Activated CD4-positive, alpha-beta memory T cell treated with anti-CD3 and anti-CD28 coated beads for 36 hours (primary cell): ENCODE measurements at regions of chr16 and their contacts with region 1.

Region 1: GRCh38 chr16:29700253-29700987 is 21.4 kb downstream of the QPRT start:
- DNase-seq: peak; percentile 86
- H3K4me3 Mint-ChIP-seq: peak overlapping the region; percentile 26
- H3K27ac Mint-ChIP-seq: peak overlapping the region; percentile 80
- H3K4me1 Mint-ChIP-seq: peaks cover 34% of the 10 kb centered on the region
- H3K27me3 Mint-ChIP-seq: no peaks in the 10 kb centered on the region

Region 2: DNA sequence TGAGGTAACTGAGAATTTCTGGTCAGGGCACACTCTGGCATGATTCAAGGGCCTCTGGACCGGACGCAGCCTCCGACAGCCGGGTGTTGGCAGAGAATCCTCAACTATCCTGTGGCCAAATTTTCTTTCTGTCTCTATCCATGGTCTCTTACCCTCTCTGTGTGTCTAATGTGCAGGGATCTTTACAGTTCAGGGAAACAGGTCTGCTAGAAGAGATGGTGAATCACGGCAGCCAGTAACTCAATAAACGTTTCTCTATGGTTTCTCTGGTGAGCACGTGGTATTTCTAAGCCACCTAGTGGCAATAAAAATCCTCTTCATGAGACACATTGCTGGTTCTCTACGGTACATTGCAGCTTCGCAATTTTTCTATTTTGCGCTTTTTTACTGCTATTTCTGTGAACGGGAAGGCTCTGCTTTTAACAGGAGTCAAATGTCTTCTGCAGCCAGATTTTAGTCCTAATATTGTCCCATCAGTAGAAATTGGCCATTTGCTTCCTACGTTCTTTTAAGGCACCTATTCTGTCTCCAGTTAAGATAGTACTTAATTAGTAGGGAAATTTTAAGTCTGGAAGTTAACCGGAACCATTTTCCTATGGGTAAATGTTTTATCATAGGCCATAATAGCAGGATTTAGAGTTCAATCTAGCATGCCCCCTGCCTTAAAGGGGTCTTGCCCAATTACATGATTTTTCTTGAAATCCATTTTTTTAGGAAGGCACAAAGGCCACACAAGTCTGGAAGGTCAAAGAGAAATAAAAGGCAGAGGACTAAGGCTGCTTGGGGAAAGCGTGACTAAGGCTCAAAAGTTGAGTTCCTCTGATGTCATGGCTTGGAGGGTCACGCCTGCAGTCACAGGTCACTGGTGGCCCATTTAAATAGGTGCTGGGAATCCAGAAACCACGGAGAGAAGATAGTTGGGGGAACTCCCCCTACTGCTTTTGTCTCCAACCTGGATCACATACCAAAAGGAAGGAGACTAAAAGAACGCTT is 10.1 kb after region 1 on chr16:
- CTCF ChIA-PET with region 1: interaction called, 68 read pairs
- POLR2A ChIA-PET with region 1: interaction called, 5 read pairs
- intact Hi-C with region 1: loop called (anchors 1 kb)
- DNase-seq: peak; percentile 33
- H3K4me3 Mint-ChIP-seq: no peak overlapping the region
- H3K27ac Mint-ChIP-seq: no peak overlapping the region
- H3K4me1 Mint-ChIP-seq: peaks cover 15% of the 10 kb centered on the region
- H3K27me3 Mint-ChIP-seq: no peaks in the 10 kb centered on the region

Region 3: DNA sequence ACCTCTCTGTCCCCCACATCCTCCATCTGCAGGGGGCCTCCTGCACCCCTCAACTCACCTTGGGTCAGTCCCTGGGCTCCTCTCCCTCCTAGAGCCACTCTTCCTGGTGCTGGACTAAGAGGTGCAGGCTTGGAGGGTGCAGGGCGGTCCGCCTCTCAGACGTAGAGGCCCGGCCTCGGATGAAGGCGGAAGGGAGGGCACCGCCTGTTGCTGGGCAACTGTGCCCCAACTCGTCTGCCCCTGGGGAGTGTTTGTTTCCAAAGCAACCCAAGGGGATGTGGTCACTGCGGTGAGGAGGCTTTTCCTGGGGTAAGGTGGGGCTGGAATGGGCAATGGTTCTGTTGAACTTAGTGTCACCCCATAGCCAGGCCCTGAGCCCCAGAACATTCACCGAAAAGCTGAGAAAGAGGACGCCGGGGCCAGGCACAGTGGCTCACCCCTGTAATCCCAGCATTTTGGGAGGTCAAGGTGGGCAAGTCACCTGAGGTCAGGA is 45.5 kb after region 1 on chr16 and contains the start of gene C16orf54:
- CTCF ChIA-PET with region 1: interaction called, 3 read pairs
- POLR2A ChIA-PET with region 1: interaction called, 3 read pairs
- intact Hi-C with region 1: loop called (anchors 2 kb)
- DNase-seq: peak; percentile 97
- H3K4me3 Mint-ChIP-seq: peak within 1 kb of the TSS; percentile 97
- H3K27ac Mint-ChIP-seq: peak within 1 kb of the TSS; percentile 98
- H3K4me1 Mint-ChIP-seq: peaks cover 60% of the 10 kb centered on the region
- H3K27me3 Mint-ChIP-seq: no peaks in the 10 kb centered on the region
- total RNA-seq, gene C16orf54: 25.2 to 26.2 TPM

Region 4: DNA sequence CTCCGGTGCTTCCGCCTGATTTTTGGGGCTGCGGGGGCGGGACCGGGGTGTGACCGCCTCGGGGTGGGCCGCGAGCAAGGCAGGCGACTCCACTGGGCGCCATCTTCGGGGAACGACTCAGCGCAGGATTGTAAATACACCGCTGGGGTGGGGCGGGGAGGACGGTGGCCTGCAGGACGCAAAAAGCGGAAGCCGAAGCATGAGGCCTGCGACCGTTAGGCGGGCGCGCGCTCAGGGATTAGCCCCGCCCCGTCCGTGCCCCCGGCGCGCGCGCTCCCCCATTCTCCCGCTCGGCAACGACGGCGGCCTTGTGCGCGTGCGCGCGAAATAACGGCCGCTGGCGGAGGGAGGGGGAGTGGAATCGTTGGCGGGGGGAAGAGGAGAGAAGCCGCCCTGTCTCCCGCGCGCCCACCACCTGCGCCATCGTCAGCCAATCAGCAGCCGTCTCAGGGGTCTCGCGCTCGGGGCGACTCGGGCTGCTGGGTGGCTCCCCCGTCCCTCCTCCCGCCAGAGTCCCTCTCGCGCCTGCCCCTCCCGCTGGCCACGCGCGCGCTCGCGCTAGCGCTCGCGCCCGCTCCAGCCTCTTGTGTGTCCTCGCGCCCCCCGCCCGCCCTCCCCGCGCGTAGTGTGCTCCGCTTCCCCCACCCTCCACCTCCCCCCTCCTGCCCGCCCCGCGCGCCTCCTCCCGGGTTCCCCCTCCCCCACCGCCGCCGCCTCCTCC is 105.1 kb after region 1 on chr16:
- CTCF ChIA-PET with region 1: interaction called, 23 read pairs
- POLR2A ChIA-PET with region 1: interaction called, 9 read pairs
- intact Hi-C with region 1: no loop called
- DNase-seq: peak; percentile 99
- H3K4me3 Mint-ChIP-seq: peak overlapping the region; percentile 92
- H3K27ac Mint-ChIP-seq: peak overlapping the region; percentile 97
- H3K4me1 Mint-ChIP-seq: peaks cover 39% of the 10 kb centered on the region
- H3K27me3 Mint-ChIP-seq: no peaks in the 10 kb centered on the region

Region 5: GRCh38 chr16:29848420-29849297 is 148.2 kb after region 1 on chr16:
- CTCF ChIA-PET with region 1: interaction called, 97 read pairs
- POLR2A ChIA-PET with region 1: interaction called, 12 read pairs
- intact Hi-C with region 1: loop called (anchors 1 kb)
- DNase-seq: peak; percentile 88
- H3K4me3 Mint-ChIP-seq: no peak overlapping the region
- H3K27ac Mint-ChIP-seq: no peak overlapping the region
- H3K4me1 Mint-ChIP-seq: peaks cover 6% of the 10 kb centered on the region
- H3K27me3 Mint-ChIP-seq: no peaks in the 10 kb centered on the region

Region 6: DNA sequence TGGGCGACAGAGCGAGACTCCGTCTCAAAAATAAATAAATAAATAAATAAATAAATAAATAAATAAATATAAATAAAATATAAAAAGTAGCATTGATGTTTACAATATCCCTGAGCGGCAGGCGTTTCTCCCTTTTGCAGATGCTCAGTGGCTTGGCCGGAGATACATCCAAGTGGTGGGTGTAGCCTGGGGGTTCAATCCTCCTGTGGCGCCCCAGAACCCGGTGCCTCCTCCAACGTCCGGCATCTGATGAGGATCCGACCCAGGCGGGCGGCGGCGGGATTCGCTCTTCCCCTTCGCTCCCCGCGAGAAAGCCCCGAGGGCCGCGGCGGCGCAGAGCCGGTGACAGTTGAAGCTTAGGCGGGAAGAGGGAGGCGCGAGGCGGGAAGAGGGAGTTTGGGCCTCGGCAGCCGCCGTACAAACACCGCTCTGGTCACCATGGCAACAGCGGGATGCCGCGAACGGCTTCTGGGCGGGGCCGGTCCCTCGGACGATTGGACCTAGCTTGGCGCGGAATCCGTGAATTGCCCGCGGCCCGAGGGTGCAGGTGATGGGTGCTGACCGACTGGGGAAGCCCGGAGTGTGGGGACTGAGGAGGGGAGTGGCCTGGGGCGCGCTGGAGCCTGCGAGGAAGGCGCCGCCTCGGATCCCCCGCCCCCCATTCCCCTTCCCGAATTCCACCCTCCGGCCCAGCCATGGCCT is 352.4 kb after region 1 on chr16:
- CTCF ChIA-PET with region 1: interaction called, 12 read pairs
- POLR2A ChIA-PET with region 1: no interaction called
- intact Hi-C with region 1: no loop called
- DNase-seq: peak; percentile 95
- H3K4me3 Mint-ChIP-seq: peak overlapping the region; percentile 86
- H3K27ac Mint-ChIP-seq: peak overlapping the region; percentile 49
- H3K4me1 Mint-ChIP-seq: peaks cover 28% of the 10 kb centered on the region
- H3K27me3 Mint-ChIP-seq: no peaks in the 10 kb centered on the region